ENCODE measurements at regions of chr12 and their contacts with region 1.

Region 1: DNA sequence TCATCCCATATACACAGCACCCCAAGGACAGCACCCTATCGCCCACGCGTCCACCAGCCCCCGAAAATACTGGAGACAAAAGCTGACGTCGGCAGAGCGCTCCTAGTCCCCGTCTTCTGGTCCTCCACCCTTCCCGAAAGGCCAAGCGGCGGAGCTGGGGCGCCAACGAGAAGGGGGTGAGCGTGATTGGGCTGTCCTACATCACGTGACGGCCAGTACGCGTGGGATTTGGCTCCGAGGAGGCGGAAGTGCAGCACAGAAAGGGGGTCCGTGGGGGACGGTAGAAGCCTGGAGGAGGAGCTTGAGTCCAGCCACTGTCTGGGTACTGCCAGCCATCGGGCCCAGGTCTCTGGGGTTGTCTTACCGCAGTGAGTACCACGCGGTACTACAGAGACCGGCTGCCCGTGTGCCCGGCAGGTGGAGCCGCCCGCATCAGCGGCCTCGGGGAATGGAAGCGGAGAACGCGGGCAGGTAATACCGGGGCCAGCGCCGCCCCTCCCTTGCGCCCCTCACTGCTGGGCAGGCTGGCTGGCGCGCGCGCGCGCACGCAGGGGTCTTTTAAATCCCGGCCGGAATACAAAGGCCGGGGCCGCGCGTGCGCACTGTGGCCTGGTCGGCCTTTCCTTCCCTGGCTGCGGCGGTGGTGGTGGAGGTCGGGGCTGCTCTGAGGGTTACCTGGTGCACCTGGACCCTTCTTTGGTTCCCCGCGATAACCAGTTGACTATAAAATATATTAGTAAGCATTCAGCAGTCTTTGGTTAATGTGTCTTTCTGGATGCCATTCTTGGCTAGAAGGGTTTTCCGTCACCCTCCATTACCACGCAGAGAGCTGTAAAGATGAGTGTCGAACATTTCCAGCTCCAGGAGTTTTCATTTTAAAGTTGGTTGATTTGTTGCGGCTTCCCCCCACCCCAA is at the start of gene TDG:
- DNase-seq: peak; percentile 99
- ATAC-seq: peak; percentile 92
- H3K4me3 ChIP-seq: peak within 1 kb of the TSS; percentile 85
- H3K27ac ChIP-seq: peak within 1 kb of the TSS; percentile 91
- H3K4me1 ChIP-seq: peaks cover 12% of the 10 kb centered on the region
- H3K27me3 ChIP-seq: no peaks in the 10 kb centered on the region
- CTCF ChIP-seq: peak; percentile 16; the same call in 1 of the 2 replicates
- POLR2A ChIP-seq: peak; percentile 89
- RAD21 ChIP-seq: no peak
- total RNA-seq, gene TDG: 14.0 and 24.2 TPM in 2 replicates

Region 2: GRCh38 chr12:103978384-103978982 is 12.6 kb after region 1 on chr12:
- CTCF ChIA-PET with region 1: interaction called, 3 read pairs
- POLR2A ChIA-PET with region 1: no interaction called
- dilution Hi-C with region 1: no loop called
- in situ Hi-C with region 1: no loop called
- intact Hi-C with region 1: loop called (anchors 1 kb)
- DNase-seq: no peak
- ATAC-seq: no peak
- H3K4me3 ChIP-seq: no peak overlapping the region
- H3K27ac ChIP-seq: no peak overlapping the region
- H3K4me1 ChIP-seq: no peaks in the 10 kb centered on the region
- H3K27me3 ChIP-seq: no peaks in the 10 kb centered on the region
- CTCF ChIP-seq: no peak
- POLR2A ChIP-seq: no peak
- RAD21 ChIP-seq: no peak

Region 3: DNA sequence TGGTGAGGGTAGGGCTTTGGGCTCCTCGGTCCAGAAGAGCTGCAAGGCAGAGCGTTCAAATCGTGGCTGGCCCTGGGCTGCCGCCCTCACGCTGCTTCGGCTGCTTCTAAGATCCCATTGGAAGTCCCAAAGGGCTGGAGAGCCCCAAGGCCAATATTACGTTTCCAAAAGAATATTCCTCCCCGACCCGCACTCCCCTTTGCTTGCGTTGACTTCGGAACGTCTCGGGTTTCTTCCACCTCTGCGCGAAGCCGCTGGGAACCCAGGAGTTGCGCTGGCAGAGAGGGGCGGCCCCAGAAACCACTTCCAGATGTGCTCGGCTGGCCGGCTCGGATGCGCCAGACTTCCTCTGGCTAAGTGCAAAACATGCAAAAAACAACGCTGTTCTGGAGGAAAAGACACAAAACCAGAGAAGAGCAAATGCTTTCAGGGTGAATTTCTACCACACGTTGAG is 84.1 kb after region 1 on chr12 and contains the start of gene GLT8D2:
- CTCF ChIA-PET with region 1: no interaction called
- POLR2A ChIA-PET with region 1: no interaction called
- dilution Hi-C with region 1: no loop called
- in situ Hi-C with region 1: no loop called
- intact Hi-C with region 1: loop called (anchors 2 kb)
- DNase-seq: peak; percentile 86
- ATAC-seq: peak; percentile 86
- H3K4me3 ChIP-seq: peak within 1 kb of the TSS; percentile 47
- H3K27ac ChIP-seq: peak within 1 kb of the TSS; percentile 95
- H3K4me1 ChIP-seq: peaks cover 14% of the 10 kb centered on the region
- H3K27me3 ChIP-seq: no peaks in the 10 kb centered on the region
- CTCF ChIP-seq: no peak
- POLR2A ChIP-seq: no peak
- RAD21 ChIP-seq: no peak
- total RNA-seq, gene GLT8D2: 30.8 and 33.5 TPM in 2 replicates

Region 4: GRCh38 chr12:104064031-104064822 is 98.4 kb after region 1 on chr12 and contains the start of gene HCFC2:
- CTCF ChIA-PET with region 1: interaction called, 3 read pairs
- POLR2A ChIA-PET with region 1: interaction called, 3 read pairs
- dilution Hi-C with region 1: no loop called
- in situ Hi-C with region 1: no loop called
- intact Hi-C with region 1: loop called (anchors 5 kb)
- DNase-seq: peak; percentile 87
- ATAC-seq: peak; percentile 95
- H3K4me3 ChIP-seq: peak within 1 kb of the TSS; percentile 89
- H3K27ac ChIP-seq: peak within 1 kb of the TSS; percentile 98
- H3K4me1 ChIP-seq: peaks cover 2% of the 10 kb centered on the region
- H3K27me3 ChIP-seq: no peaks in the 10 kb centered on the region
- CTCF ChIP-seq: no peak
- POLR2A ChIP-seq: no peak
- RAD21 ChIP-seq: no peak
- total RNA-seq, gene HCFC2: 33.3 and 34.2 TPM in 2 replicates

Region 5: GRCh38 chr12:104286538-104287482 is 321.0 kb after region 1 on chr12:
- CTCF ChIA-PET with region 1: no interaction called
- POLR2A ChIA-PET with region 1: no interaction called
- dilution Hi-C with region 1: no loop called
- in situ Hi-C with region 1: no loop called
- intact Hi-C with region 1: loop called (anchors 10 kb)
- DNase-seq: peak; percentile 96
- ATAC-seq: peak; percentile 80
- H3K4me3 ChIP-seq: peak overlapping the region; percentile 68
- H3K27ac ChIP-seq: peak overlapping the region; percentile 88
- H3K4me1 ChIP-seq: peaks cover 14% of the 10 kb centered on the region
- H3K27me3 ChIP-seq: no peaks in the 10 kb centered on the region
- CTCF ChIP-seq: no peak
- POLR2A ChIP-seq: peak; percentile 98
- RAD21 ChIP-seq: no peak

Measured in IMR-90 (cell line).